ENCODE measurements at regions of chr14 and their contacts with region 1.

Region 1: DNA sequence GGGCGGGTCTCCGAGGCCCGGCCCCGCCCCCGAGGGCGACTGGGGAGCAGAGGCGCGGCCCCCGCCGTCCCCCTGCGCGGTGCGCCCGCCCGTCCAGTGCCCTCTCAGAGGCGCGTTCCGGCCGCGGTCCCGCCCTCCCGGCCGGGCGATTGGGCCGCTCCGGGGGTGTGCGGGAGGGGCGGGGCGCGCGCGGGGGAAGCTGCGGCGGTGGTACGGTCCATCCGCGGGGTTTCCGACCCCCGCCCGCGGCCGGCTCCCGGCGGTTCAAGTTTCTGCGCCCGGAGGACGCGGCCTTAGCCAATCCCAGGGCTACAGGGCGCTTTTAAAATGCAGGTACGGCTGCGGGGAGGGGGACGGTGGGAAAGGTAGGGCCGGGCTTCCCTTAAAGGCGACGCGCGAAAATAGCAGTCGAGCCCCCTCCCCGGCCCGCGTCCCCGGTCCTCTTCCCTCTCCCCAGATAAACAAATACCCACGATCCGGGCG is 317 bp upstream of the CCDC85C start:
- DNase-seq: peak; percentile 85
- ATAC-seq: peak; percentile 91
- H3K4me3 ChIP-seq: peak overlapping the region; percentile 83 to 94
- H3K27ac ChIP-seq: peak overlapping the region; percentile 89
- H3K4me1 ChIP-seq: peaks cover 19 to 32% of the 10 kb centered on the region in 2 experiments
- H3K27me3 ChIP-seq: no peaks in the 10 kb centered on the region
- CTCF ChIP-seq: no peak
- POLR2A ChIP-seq: no peak
- RAD21 ChIP-seq: no peak

Region 2: GRCh38 chr14:99480917-99481744 is 123.2 kb before region 1 on chr14 and contains the start of gene CCNK:
- CTCF ChIA-PET with region 1: no interaction called
- POLR2A ChIA-PET with region 1: interaction called, 3 read pairs
- RAD21 ChIA-PET with region 1: no interaction called
- intact Hi-C with region 1: loop called (anchors 2 kb)
- DNase-seq: peak; percentile 99
- ATAC-seq: peak; percentile 89
- H3K4me3 ChIP-seq: peak within 1 kb of the TSS; percentile 76 to 89
- H3K27ac ChIP-seq: peak within 1 kb of the TSS; percentile 86
- H3K4me1 ChIP-seq: peaks cover 10 to 18% of the 10 kb centered on the region in 2 experiments; a peak in 3 of 4 replicates
- H3K27me3 ChIP-seq: no peaks in the 10 kb centered on the region
- CTCF ChIP-seq: no peak
- POLR2A ChIP-seq: peak; percentile 75
- RAD21 ChIP-seq: no peak
- total RNA-seq, gene CCNK: 68.2 TPM

Region 3: DNA sequence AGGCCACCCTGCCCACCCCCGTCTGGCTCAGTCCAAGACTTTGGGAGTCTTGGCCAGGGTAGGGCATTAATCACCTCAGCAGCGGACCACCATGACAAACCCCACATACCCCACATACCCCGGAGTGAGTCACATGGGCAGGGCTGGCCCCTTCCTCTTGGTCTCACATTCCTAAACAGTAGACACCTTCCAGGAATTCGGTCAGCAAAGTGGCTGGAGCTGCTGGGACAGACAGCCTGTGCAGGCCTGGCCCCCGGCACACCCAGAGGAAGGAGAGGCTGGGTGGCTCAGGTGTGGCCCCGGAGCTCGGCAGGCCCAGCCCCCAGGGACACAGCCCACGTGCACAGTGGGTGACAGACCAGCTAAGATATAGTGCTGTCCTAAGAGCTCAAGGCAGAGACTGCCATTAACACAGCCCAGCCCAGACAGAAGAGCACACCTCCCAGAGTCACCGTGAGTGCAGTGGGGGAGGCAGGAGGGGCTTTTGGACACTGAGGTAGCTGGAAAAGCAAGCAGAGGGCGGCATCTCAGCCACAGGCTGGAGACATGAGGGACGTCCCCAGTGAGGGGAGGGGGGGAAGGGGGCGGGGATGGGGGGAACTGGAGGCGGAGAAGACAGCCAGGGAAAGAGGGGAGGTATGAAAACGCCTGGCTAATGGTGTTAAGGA is 24.3 kb before region 1 on chr14:
- CTCF ChIA-PET with region 1: interaction called, 8 read pairs
- POLR2A ChIA-PET with region 1: interaction called, 3 read pairs
- RAD21 ChIA-PET with region 1: interaction called, 4 to 6 read pairs
- intact Hi-C with region 1: loop called (anchors 2 kb)
- DNase-seq: peak; percentile 47
- ATAC-seq: peak; percentile 71
- H3K4me3 ChIP-seq: peak overlapping the region; percentile 12 to 52
- H3K27ac ChIP-seq: peak overlapping the region; percentile 85
- H3K4me1 ChIP-seq: peaks cover 52 to 74% of the 10 kb centered on the region in 2 experiments
- H3K27me3 ChIP-seq: no peaks in the 10 kb centered on the region
- CTCF ChIP-seq: no peak
- POLR2A ChIP-seq: no peak
- RAD21 ChIP-seq: no peak